Activated T-helper 1 cell treated with anti-CD3 and anti-CD28 coated beads, Interleukin-12 subunit alpha, Interleukin-12 subunit beta, Interleukin-2, Interleukin-4 antibody, amounts not matched to agents 30 ng/mL and 10 ng/mL and 1 ng/mL, durations not matched to agents 14 hours and 24 hours and 36 hours (primary cell): ENCODE measurements at regions of chr1 and their contacts with region 1.

Region 1: GRCh38 chr1:41751804-41752513 is 166.8 kb downstream of the HIVEP3 start:
- DNase-seq: no peak
- H3K4me3 Mint-ChIP-seq: peak overlapping the region; percentile 48
- H3K27ac Mint-ChIP-seq: peak overlapping the region; percentile 81
- H3K4me1 Mint-ChIP-seq: peaks cover 90% of the 10 kb centered on the region
- H3K27me3 Mint-ChIP-seq: no peaks in the 10 kb centered on the region

Region 2: DNA sequence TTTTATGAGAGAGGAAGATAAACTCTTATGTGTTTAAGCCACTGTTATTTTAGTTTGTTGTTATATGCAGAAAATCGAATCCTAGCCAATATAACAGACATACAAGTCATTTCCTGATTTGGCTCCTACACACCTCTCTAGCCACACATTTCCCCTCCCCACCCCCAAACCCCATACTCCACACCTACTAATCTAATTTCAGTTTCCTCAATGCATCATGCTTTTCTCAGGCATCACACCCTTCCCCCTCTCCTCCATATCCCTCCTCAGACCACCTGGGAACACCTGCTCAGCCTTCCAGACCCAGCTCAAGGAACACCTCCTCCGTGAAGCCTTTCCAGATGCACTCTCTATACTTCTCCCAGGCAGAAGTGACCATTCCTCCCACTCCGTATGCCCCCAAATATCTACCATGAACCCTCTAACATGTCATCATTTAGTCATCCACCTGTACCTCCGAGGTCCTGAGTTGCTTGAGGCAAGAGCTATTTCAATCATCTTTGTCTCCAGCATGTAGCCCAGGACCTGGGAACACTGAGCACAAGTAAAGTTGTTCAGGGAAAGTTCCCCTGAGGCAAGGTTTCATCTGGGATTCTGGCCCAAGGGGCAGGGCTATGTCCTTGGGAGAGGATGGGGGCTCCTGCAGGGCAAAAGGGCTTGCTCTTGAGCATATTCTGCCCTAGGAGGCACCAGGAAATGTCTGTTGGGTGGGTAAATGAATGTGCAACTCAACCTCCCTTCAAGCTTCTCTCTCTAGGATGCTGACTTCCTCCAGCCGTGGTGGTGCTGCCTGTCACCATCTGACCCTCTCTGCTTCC is 39.9 kb after region 1 on chr1:
- intact Hi-C with region 1: loop called (anchors 1 kb)
- DNase-seq: peak; percentile 11
- H3K4me3 Mint-ChIP-seq: peak overlapping the region; percentile 32
- H3K27ac Mint-ChIP-seq: peak overlapping the region; percentile 89
- H3K4me1 Mint-ChIP-seq: peaks cover 74% of the 10 kb centered on the region
- H3K27me3 Mint-ChIP-seq: no peaks in the 10 kb centered on the region